ENCODE measurements at regions of chr2 and their contacts with region 1.

Region 1: DNA sequence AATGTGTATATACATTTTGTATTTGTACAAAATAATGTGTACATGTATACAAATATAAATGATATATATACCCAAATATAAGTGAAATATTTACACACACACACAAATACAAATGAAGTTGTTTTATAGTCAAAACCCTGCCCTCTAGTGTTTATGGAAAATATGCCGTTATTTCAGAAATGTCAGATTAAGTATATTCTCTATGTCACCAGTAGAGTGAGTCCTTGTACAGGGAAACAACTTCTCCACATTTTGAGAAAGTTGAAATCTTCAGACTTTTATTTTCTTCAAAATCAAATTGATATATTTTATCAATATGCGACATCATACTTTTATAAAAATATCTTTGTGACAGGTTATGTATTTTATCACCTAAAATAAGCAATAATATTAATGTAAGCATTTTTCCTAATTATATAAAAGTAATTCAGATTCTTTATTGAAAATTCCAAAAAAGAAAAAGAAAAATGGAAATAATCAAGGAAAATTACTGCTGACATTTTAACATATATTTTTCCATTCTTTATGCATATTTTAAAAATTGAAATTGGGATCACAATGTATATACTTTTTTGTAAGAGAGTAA is 22.4 kb downstream of the ARL6IP6 start:
- DNase-seq: peak; percentile 72
- ATAC-seq: peak; percentile 85
- H3K4me3 ChIP-seq: no peak overlapping the region
- H3K27ac ChIP-seq: no peak overlapping the region
- H3K4me1 ChIP-seq: no peaks in the 10 kb centered on the region
- H3K27me3 ChIP-seq: no peaks in the 10 kb centered on the region
- CTCF ChIP-seq: peak; percentile 99
- POLR2A ChIP-seq: no peak
- RAD21 ChIP-seq: peak; percentile 86

Region 2: DNA sequence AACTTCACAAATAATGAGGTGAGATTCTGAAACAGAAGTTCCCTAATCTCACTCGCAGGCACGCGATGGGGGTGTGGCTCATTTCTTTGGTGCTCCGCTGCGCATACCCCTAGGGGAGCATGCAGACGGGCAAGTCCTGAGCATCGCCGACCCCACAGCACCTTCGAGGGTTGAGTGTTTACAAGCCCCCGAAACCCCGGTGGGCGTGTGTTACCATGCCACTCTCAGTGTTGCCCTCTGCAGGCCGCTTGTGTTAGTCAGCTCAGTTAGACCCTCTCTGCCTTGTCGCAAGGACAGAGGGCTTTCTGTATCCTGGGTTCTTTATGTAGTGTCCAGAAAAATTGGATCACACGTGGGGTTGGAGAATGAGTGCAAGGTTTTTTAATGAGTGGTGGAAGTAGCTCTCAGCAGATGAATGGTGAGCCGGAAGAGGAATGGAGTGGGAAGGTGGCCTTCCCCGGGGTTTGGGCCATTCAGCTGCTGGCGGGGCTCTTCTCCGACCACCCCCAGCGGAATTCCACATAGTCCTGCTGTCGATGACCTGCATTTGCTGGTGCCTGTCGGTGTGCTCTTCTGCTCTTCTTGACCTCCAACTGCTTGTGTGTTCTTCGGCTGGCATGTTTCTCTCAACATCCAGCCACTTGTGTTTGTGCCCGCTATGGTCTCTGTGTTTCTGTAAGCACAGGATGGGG is 546.4 kb after region 1 on chr2:
- CTCF ChIA-PET with region 1: no interaction called
- POLR2A ChIA-PET with region 1: no interaction called
- dilution Hi-C with region 1: no loop called
- in situ Hi-C with region 1: no loop called
- intact Hi-C with region 1: loop called (anchors 5 kb)
- DNase-seq: no peak
- ATAC-seq: no peak
- H3K4me3 ChIP-seq: no peak overlapping the region
- H3K27ac ChIP-seq: no peak overlapping the region
- H3K4me1 ChIP-seq: no peaks in the 10 kb centered on the region
- H3K27me3 ChIP-seq: no peaks in the 10 kb centered on the region
- CTCF ChIP-seq: no peak
- POLR2A ChIP-seq: no peak
- RAD21 ChIP-seq: no peak

Region 3: GRCh38 chr2:153478334-153479261 is 737.8 kb after region 1 on chr2 and contains the start of gene RPRM:
- CTCF ChIA-PET with region 1: no interaction called
- POLR2A ChIA-PET with region 1: no interaction called
- dilution Hi-C with region 1: no loop called
- in situ Hi-C with region 1: no loop called
- intact Hi-C with region 1: loop called (anchors 1 kb)
- DNase-seq: peak; percentile 37
- ATAC-seq: peak; percentile 98
- H3K4me3 ChIP-seq: peak within 1 kb of the TSS; percentile 49
- H3K27ac ChIP-seq: no peak within 1 kb of the TSS
- H3K4me1 ChIP-seq: no peaks in the 10 kb centered on the region
- H3K27me3 ChIP-seq: peaks cover 17% of the 10 kb centered on the region
- CTCF ChIP-seq: peak; percentile 80
- POLR2A ChIP-seq: no peak
- RAD21 ChIP-seq: peak; percentile 68
- total RNA-seq, gene RPRM: not detected in 2 replicates

Region 4: GRCh38 chr2:153519257-153519875 is 778.5 kb after region 1 on chr2:
- CTCF ChIA-PET with region 1: no interaction called
- POLR2A ChIA-PET with region 1: no interaction called
- dilution Hi-C with region 1: no loop called
- in situ Hi-C with region 1: loop called (anchors 25 kb)
- intact Hi-C with region 1: loop called (anchors 1 kb)
- DNase-seq: peak; percentile 39
- ATAC-seq: peak; percentile 37
- H3K4me3 ChIP-seq: no peak overlapping the region
- H3K27ac ChIP-seq: no peak overlapping the region
- H3K4me1 ChIP-seq: no peaks in the 10 kb centered on the region
- H3K27me3 ChIP-seq: no peaks in the 10 kb centered on the region
- CTCF ChIP-seq: peak; percentile 61
- POLR2A ChIP-seq: no peak
- RAD21 ChIP-seq: peak; percentile 52

Measured in IMR-90 (cell line).